Endothelial cell of umbilical vein (primary cell): ENCODE measurements at regions of chr12 and their contacts with region 1.

Region 1: GRCh38 chr12:41521872-41522379 is 333.8 kb downstream of the PDZRN4 start:
- DNase-seq: peak; percentile 92
- H3K4me3 ChIP-seq: peak overlapping the region in 2 of 3 experiments; percentile 32 to 62
- H3K27ac ChIP-seq: peak overlapping the region; percentile 89
- H3K4me1 ChIP-seq: peaks cover 19% of the 10 kb centered on the region
- H3K27me3 ChIP-seq: no peaks in the 10 kb centered on the region
- CTCF ChIP-seq: no peak
- POLR2A ChIP-seq: no peak

Region 2: DNA sequence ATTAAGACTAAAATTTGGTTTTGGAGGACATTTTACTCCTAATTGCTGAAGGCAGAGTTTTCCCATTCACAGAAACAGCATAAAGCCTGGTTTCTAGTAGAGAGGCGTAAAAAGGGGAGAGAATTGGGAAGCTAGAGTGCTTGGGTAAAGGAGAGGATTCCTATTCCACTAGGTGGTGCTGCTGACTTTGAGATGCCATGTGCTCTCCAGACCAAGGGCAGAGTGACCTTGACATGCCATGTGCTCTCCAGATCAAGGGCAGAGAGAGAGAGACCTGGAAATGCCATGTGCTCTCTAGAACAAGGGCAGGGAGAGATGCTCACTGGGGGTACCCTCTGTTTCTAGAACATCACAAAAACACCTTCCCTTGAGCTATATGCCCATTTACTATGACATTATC is 510.0 kb before region 1 on chr12:
- CTCF ChIA-PET with region 1: no interaction called
- POLR2A ChIA-PET with region 1: no interaction called
- dilution Hi-C with region 1: no loop called
- intact Hi-C with region 1: loop called (anchors 10 kb)
- DNase-seq: peak; percentile 19
- H3K4me3 ChIP-seq: no peak overlapping the region
- H3K27ac ChIP-seq: no peak overlapping the region
- H3K4me1 ChIP-seq: peaks cover 22% of the 10 kb centered on the region
- H3K27me3 ChIP-seq: no peaks in the 10 kb centered on the region
- CTCF ChIP-seq: peak in 1 of 2 donors; percentile 26
- POLR2A ChIP-seq: no peak

Region 3: GRCh38 chr12:41466802-41467201 is 55.1 kb before region 1 on chr12:
- CTCF ChIA-PET with region 1: no interaction called
- POLR2A ChIA-PET with region 1: no interaction called
- dilution Hi-C with region 1: no loop called
- intact Hi-C with region 1: no loop called
- DNase-seq: no peak
- H3K4me3 ChIP-seq: no peak overlapping the region
- H3K27ac ChIP-seq: no peak overlapping the region
- H3K4me1 ChIP-seq: peaks cover 10% of the 10 kb centered on the region
- H3K27me3 ChIP-seq: no peaks in the 10 kb centered on the region
- CTCF ChIP-seq: no peak
- POLR2A ChIP-seq: no peak

Region 4: GRCh38 chr12:41486718-41487117 is 35.2 kb before region 1 on chr12:
- CTCF ChIA-PET with region 1: no interaction called
- POLR2A ChIA-PET with region 1: no interaction called
- dilution Hi-C with region 1: no loop called
- intact Hi-C with region 1: loop called (anchors 1 kb)
- DNase-seq: no peak
- H3K4me3 ChIP-seq: no peak overlapping the region
- H3K27ac ChIP-seq: peak overlapping the region; percentile 71
- H3K4me1 ChIP-seq: peaks cover 24% of the 10 kb centered on the region
- H3K27me3 ChIP-seq: no peaks in the 10 kb centered on the region
- CTCF ChIP-seq: no peak
- POLR2A ChIP-seq: no peak

Region 5: GRCh38 chr12:41653386-41654326 is 131.7 kb after region 1 on chr12:
- CTCF ChIA-PET with region 1: no interaction called
- POLR2A ChIA-PET with region 1: no interaction called
- dilution Hi-C with region 1: no loop called
- intact Hi-C with region 1: no loop called
- DNase-seq: no peak
- H3K4me3 ChIP-seq: no peak overlapping the region
- H3K27ac ChIP-seq: no peak overlapping the region
- H3K4me1 ChIP-seq: no peaks in the 10 kb centered on the region
- H3K27me3 ChIP-seq: no peaks in the 10 kb centered on the region
- CTCF ChIP-seq: no peak
- POLR2A ChIP-seq: no peak

Region 6: DNA sequence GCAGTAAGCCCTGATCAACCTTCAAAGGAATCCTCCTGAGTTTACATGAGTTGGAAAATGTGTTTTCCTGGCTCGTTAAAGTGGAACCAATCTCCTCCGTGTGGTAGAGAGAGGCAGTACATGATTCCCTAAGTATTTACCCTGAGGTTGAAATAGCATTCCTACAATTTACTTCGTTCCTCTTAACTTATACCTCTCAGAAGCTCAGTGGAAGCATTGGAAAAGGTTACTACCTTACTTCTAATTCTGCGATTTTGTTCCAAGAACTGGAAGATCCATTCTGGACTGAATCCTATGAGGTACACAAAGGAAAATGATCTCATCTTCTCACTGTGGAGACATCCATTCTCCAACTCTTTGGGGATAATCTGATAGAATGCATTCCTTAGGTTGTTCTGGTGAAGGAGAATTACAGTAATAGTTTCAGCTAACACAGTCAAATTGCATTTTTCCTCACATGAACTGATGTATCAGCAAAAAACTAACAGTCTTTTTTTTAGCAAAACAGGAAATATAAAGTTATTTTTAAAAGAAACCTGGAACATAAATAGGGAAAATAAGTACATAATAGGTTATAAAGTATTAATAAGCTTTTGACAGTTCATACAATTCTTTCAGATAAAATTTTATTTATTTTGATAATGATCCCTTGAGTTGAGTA is 141.8 kb after region 1 on chr12:
- CTCF ChIA-PET with region 1: no interaction called
- POLR2A ChIA-PET with region 1: no interaction called
- dilution Hi-C with region 1: no loop called
- intact Hi-C with region 1: loop called (anchors 10 kb)
- DNase-seq: peak; percentile 50
- H3K4me3 ChIP-seq: no peak overlapping the region
- H3K27ac ChIP-seq: no peak overlapping the region
- H3K4me1 ChIP-seq: no peaks in the 10 kb centered on the region
- H3K27me3 ChIP-seq: no peaks in the 10 kb centered on the region
- CTCF ChIP-seq: peak; percentile 35 to 43
- POLR2A ChIP-seq: no peak

Region 7: DNA sequence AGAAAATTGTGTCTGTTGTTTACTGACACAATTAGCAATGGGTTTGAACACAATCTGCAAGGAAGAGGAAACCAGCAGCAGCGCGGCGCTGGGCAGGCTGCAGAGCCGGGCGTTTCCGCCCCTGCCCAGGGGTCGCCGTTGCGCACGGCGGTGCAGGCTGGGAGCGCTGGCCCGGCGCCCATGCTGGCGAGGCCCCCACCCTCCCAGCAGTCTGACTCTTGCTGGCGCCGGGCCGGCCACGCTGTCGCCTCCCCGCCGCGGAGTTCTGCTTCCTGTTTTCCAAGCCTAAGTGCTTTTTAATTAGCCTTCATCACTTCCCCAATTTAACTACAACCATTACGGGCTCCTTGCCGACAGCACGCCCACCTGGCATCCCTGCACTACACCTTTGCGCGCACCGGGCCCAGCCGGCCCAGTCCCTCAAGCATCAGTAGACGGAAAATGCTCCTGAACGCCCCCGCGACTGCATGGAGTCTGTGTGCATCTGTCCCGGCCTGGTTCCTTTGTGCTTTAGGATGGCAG is 410.6 kb after region 1 on chr12:
- CTCF ChIA-PET with region 1: no interaction called
- POLR2A ChIA-PET with region 1: no interaction called
- dilution Hi-C with region 1: no loop called
- intact Hi-C with region 1: loop called (anchors 1 kb)
- DNase-seq: peak; percentile 90
- H3K4me3 ChIP-seq: peak overlapping the region; percentile 25 to 46 (median 26)
- H3K27ac ChIP-seq: peak overlapping the region; percentile 61
- H3K4me1 ChIP-seq: peaks cover 13% of the 10 kb centered on the region
- H3K27me3 ChIP-seq: no peaks in the 10 kb centered on the region
- CTCF ChIP-seq: no peak
- POLR2A ChIP-seq: no peak

Region 8: DNA sequence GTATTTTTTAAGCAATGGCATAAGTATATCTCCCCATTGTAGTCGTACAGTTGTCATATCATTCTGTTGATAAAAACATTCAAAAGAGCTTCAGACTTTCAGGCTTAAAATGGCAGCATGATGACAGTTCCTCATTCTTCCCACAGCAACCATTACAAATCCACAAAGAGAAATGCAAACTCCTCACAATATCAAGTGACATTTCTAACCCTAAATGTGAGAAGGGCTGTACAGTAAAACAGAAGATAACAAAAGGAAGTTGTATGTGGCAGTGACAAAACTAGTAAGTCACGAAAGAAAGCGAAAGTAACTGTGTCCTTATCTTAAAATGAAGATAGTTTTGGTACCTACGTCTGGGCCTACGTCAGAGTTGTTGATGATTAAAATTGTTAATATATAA is 576.0 kb after region 1 on chr12:
- CTCF ChIA-PET with region 1: no interaction called
- POLR2A ChIA-PET with region 1: no interaction called
- dilution Hi-C with region 1: no loop called
- intact Hi-C with region 1: loop called (anchors 10 kb)
- DNase-seq: peak; percentile 77
- H3K4me3 ChIP-seq: peak overlapping the region; percentile 13 to 81 (median 57)
- H3K27ac ChIP-seq: peak overlapping the region; percentile 74
- H3K4me1 ChIP-seq: peaks cover 6% of the 10 kb centered on the region
- H3K27me3 ChIP-seq: no peaks in the 10 kb centered on the region
- CTCF ChIP-seq: no peak
- POLR2A ChIP-seq: no peak